IMR-90 (cell line): ENCODE measurements at regions of chr1 and their contacts with region 1.

Region 1: DNA sequence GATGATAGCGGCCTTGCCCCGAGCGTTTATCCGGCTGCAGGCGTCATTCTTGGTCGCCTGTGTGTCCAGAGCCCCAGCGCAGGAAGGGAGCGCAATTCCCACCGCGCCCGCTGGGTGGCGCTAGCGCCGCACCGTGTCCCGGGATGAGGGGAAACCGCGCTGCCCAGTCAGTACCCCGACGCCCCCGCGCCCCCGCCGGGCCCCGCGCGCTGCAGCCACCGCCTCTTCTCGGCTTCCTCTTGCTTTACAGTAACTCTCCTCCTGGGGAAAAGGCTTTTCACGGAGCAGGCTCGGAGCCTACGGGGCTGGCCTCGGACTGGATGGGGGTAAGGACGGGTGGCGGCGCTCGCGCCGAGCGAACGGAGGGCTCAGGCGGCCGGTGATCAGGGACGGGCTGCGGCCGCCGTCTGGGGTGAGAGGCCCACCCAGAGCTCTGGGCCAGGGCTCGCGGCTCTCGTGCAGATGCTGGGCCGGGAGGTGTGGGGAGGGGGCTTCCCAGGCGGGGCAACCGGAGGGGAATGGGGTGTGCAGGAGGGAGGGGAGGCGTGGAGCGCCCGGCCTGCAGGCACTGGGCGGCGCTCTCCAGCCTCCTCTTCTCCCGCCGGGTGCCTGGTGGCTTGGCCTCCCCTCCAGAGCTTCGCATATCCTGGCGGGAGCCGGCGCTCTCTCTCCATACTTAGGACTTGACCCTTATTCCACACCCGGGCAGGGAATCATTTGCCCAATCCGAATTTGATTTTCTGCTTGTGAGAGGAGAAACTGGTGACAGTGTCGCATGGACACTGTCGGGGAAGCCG is 29.8 kb downstream of the TEX35 start:
- DNase-seq: peak; percentile 89
- ATAC-seq: peak; percentile 77
- H3K4me3 ChIP-seq: peak overlapping the region; percentile 64
- H3K27ac ChIP-seq: peak overlapping the region; percentile 93
- H3K4me1 ChIP-seq: peaks cover 40% of the 10 kb centered on the region
- H3K27me3 ChIP-seq: no peaks in the 10 kb centered on the region
- CTCF ChIP-seq: peak; percentile 88
- POLR2A ChIP-seq: peak; percentile 21; the same call in 1 of the 2 replicates
- RAD21 ChIP-seq: peak; percentile 82

Region 2: DNA sequence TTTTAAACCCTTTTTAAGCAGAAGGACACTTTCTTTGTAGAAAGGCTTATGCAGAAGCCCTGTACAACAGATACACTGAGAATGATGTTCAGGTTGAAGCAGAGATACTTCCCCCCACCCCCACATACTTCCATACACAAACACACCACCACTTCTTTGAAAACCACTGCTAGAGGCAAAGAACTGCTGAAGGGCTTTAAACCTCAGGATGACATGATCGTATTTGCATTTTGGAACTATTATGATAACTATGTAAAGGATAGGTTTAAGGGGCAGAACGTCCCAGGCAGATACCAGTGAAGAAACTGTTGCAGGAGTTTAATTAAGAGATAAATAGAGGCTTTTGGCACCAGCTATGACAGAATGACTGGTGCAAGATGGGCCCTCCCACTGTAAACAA is 248.6 kb before region 1 on chr1:
- CTCF ChIA-PET with region 1: no interaction called
- POLR2A ChIA-PET with region 1: no interaction called
- dilution Hi-C with region 1: no loop called
- in situ Hi-C with region 1: no loop called
- intact Hi-C with region 1: no loop called
- DNase-seq: no peak
- ATAC-seq: no peak; the same call in 1 of the 2 replicates
- H3K4me3 ChIP-seq: no peak overlapping the region
- H3K27ac ChIP-seq: no peak overlapping the region
- H3K4me1 ChIP-seq: peaks cover 4% of the 10 kb centered on the region
- H3K27me3 ChIP-seq: no peaks in the 10 kb centered on the region
- CTCF ChIP-seq: no peak
- POLR2A ChIP-seq: no peak
- RAD21 ChIP-seq: no peak

Region 3: GRCh38 chr1:178417858-178418257 is 124.9 kb before region 1 on chr1:
- CTCF ChIA-PET with region 1: no interaction called
- POLR2A ChIA-PET with region 1: no interaction called
- dilution Hi-C with region 1: no loop called
- in situ Hi-C with region 1: no loop called
- intact Hi-C with region 1: no loop called
- DNase-seq: peak; percentile 91
- ATAC-seq: peak; percentile 87
- H3K4me3 ChIP-seq: no peak overlapping the region
- H3K27ac ChIP-seq: no peak overlapping the region
- H3K4me1 ChIP-seq: peaks cover 1% of the 10 kb centered on the region; the same call in 1 of the 2 replicates
- H3K27me3 ChIP-seq: no peaks in the 10 kb centered on the region
- CTCF ChIP-seq: no peak
- POLR2A ChIP-seq: no peak
- RAD21 ChIP-seq: no peak

Region 4: DNA sequence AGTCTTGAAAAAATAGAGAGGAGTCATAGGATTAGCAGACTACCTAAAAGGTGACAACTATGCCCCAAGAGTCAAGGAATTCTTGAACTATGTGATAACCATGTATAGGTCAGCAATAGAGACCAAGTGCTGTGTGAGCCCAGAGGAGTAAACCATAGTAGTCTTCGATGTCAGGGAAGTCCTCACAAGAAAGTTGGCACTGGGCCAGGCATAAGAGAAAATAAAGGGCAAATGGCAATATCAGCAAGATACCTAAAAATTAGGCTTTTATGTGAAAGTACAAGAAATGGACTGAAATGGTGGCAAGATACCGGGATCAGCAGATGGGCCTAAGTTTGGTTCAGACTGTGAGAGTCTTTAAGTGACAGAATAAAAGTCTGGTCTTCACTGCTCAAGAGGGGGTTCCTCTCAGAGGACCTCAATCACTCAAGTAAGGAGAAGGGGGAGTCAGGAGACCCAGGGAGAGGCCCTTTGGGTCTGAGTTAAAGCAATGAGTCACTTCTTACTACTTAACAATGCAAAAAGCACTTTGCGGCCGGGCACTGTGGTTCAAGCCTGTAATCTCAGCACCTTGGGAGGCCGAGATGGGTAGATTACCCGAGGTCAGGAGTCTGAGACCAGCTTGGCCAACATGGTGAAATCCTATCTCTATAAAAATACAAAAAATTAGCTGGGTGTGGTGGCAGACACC is 65.1 kb after region 1 on chr1:
- CTCF ChIA-PET with region 1: interaction called, 3 read pairs
- POLR2A ChIA-PET with region 1: no interaction called
- dilution Hi-C with region 1: no loop called
- in situ Hi-C with region 1: no loop called
- intact Hi-C with region 1: loop called (anchors 2 kb)
- DNase-seq: no peak
- ATAC-seq: no peak
- H3K4me3 ChIP-seq: no peak overlapping the region
- H3K27ac ChIP-seq: peak overlapping the region; percentile 99
- H3K4me1 ChIP-seq: peaks cover 31% of the 10 kb centered on the region
- H3K27me3 ChIP-seq: no peaks in the 10 kb centered on the region
- CTCF ChIP-seq: no peak
- POLR2A ChIP-seq: no peak
- RAD21 ChIP-seq: no peak

Region 5: GRCh38 chr1:178725603-178726517 is 183.1 kb after region 1 on chr1:
- CTCF ChIA-PET with region 1: interaction called, 3 read pairs
- POLR2A ChIA-PET with region 1: interaction called, 3 read pairs
- dilution Hi-C with region 1: no loop called
- in situ Hi-C with region 1: loop called (anchors 10 kb)
- intact Hi-C with region 1: loop called (anchors 1 kb)
- DNase-seq: peak; percentile 84
- ATAC-seq: peak; percentile 61
- H3K4me3 ChIP-seq: peak overlapping the region; percentile 91
- H3K27ac ChIP-seq: peak overlapping the region; percentile 76
- H3K4me1 ChIP-seq: no peaks in the 10 kb centered on the region; the same call in 1 of the 2 replicates
- H3K27me3 ChIP-seq: no peaks in the 10 kb centered on the region
- CTCF ChIP-seq: no peak
- POLR2A ChIP-seq: no peak
- RAD21 ChIP-seq: no peak

Region 6: GRCh38 chr1:178768423-178768822 is 225.7 kb after region 1 on chr1:
- CTCF ChIA-PET with region 1: no interaction called
- POLR2A ChIA-PET with region 1: no interaction called
- dilution Hi-C with region 1: no loop called
- in situ Hi-C with region 1: loop called (anchors 10 kb)
- intact Hi-C with region 1: no loop called
- DNase-seq: no peak
- ATAC-seq: no peak
- H3K4me3 ChIP-seq: no peak overlapping the region
- H3K27ac ChIP-seq: no peak overlapping the region
- H3K4me1 ChIP-seq: peaks cover 2% of the 10 kb centered on the region; the same call in 1 of the 2 replicates
- H3K27me3 ChIP-seq: no peaks in the 10 kb centered on the region
- CTCF ChIP-seq: peak; percentile 52
- POLR2A ChIP-seq: no peak
- RAD21 ChIP-seq: peak; percentile 52

Region 7: GRCh38 chr1:178869119-178869697 is 326.4 kb after region 1 on chr1:
- CTCF ChIA-PET with region 1: no interaction called
- POLR2A ChIA-PET with region 1: no interaction called
- dilution Hi-C with region 1: no loop called
- in situ Hi-C with region 1: no loop called
- intact Hi-C with region 1: loop called (anchors 5 kb)
- DNase-seq: peak; percentile 63
- ATAC-seq: peak; percentile 48
- H3K4me3 ChIP-seq: no peak overlapping the region
- H3K27ac ChIP-seq: no peak overlapping the region
- H3K4me1 ChIP-seq: peaks cover 5% of the 10 kb centered on the region
- H3K27me3 ChIP-seq: no peaks in the 10 kb centered on the region
- CTCF ChIP-seq: no peak
- POLR2A ChIP-seq: no peak
- RAD21 ChIP-seq: no peak

Region 8: DNA sequence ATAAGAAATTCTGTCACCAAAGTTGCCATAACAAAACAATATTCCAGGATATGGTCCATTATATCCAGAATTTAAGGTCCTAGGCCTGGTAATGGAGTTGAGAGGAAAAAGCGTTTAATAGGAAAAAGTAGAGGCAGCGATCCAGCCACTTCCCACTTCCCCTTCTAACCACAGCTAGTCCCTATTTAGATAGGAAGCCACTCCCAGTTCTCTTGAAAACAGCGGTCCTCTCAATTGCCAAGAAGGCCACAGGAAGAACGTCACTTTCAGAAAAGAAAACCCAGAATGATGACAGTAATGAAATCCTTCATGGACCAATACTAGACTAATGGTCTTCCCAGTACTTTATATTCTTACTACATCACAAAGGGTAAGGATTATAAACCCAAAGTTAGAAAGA is 648.1 kb after region 1 on chr1:
- CTCF ChIA-PET with region 1: no interaction called
- POLR2A ChIA-PET with region 1: no interaction called
- dilution Hi-C with region 1: no loop called
- in situ Hi-C with region 1: no loop called
- intact Hi-C with region 1: loop called (anchors 1 kb)
- DNase-seq: no peak
- ATAC-seq: no peak
- H3K4me3 ChIP-seq: no peak overlapping the region
- H3K27ac ChIP-seq: no peak overlapping the region
- H3K4me1 ChIP-seq: peaks cover 2% of the 10 kb centered on the region; the same call in 1 of the 2 replicates
- H3K27me3 ChIP-seq: no peaks in the 10 kb centered on the region
- CTCF ChIP-seq: no peak
- POLR2A ChIP-seq: no peak
- RAD21 ChIP-seq: no peak